ENCODE measurements at regions of chr16 and their contacts with region 1.

Region 1: GRCh38 chr16:66608241-66609138 is 4.0 kb downstream of the CMTM3 start:
- DNase-seq: peak; percentile 71
- H3K4me3 ChIP-seq: no peak overlapping the region; the same call in 1 of the 2 replicates
- H3K27ac ChIP-seq: peak overlapping the region; percentile 57
- H3K27me3 ChIP-seq: no peaks in the 10 kb centered on the region
- CTCF ChIP-seq: peak; percentile 94

Region 2: GRCh38 chr16:66569827-66570405 is 38.6 kb before region 1 on chr16:
- CTCF ChIA-PET with region 1: interaction called, 12 read pairs
- POLR2A ChIA-PET with region 1: no interaction called
- DNase-seq: no peak
- H3K4me3 ChIP-seq: no peak overlapping the region
- H3K27ac ChIP-seq: no peak overlapping the region
- H3K27me3 ChIP-seq: no peaks in the 10 kb centered on the region
- CTCF ChIP-seq: no peak

Region 3: DNA sequence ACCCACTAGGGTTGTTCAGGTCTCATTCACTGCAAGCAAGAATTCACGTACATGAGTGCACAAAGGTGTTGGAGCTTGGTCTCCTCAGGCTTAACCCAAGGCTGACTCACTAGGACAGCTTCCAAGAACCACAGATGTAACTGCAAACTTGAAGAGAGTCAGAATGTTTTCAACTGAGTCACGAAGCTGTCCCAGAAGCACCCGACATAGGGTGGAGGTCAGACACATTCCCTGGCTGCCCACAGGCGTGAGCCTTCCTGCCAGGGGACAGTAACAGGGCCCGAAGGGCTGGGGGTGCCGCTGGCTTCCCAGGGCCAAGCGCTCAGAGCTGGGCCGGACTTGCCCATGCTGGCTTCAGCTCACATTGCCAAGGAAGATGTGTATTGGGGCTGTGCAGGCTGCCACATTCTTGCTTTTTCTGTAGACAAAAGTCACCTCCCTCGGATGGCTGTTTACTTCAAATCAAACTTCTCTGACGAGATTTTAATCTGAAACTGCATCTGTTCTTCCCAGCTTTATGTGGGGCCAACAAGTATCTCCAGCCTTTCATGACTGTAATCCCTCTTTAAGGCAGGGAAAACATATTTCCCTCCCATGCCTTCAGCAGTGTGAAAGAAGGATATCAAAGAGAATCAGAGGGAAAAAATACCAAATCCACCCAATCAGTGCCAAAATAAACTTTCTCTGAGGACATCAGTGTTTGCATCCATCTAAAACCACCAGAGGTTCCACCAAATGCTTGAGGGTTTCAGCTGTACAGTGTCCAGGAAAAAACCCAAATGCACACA is 10.3 kb after region 1 on chr16:
- CTCF ChIA-PET with region 1: interaction called, 47 read pairs
- POLR2A ChIA-PET with region 1: interaction called, 4 read pairs
- DNase-seq: peak; percentile 81
- H3K4me3 ChIP-seq: no peak overlapping the region
- H3K27ac ChIP-seq: peak overlapping the region; percentile 88
- H3K27me3 ChIP-seq: no peaks in the 10 kb centered on the region
- CTCF ChIP-seq: no peak

Region 4: GRCh38 chr16:66660422-66661209 is 52.1 kb after region 1 on chr16:
- CTCF ChIA-PET with region 1: interaction called, 25 read pairs
- POLR2A ChIA-PET with region 1: interaction called, 3 read pairs
- DNase-seq: peak; percentile 41
- H3K4me3 ChIP-seq: peak overlapping the region; percentile 5; the same call in 1 of the 2 replicates
- H3K27ac ChIP-seq: peak overlapping the region; percentile 79
- H3K27me3 ChIP-seq: no peaks in the 10 kb centered on the region
- CTCF ChIP-seq: peak; percentile 49

Region 5: GRCh38 chr16:66740010-66740409 is 131.5 kb after region 1 on chr16:
- CTCF ChIA-PET with region 1: interaction called, 17 read pairs
- POLR2A ChIA-PET with region 1: no interaction called
- DNase-seq: no peak
- H3K4me3 ChIP-seq: no peak overlapping the region
- H3K27ac ChIP-seq: no peak overlapping the region
- H3K27me3 ChIP-seq: no peaks in the 10 kb centered on the region
- CTCF ChIP-seq: peak; percentile 67

Measured in AG04450 (cell line).